Right lobe of liver (tissue), 6 donors: ENCODE measurements at regions of chr7 and their contacts with region 1.

Region 1: GRCh38 chr7:2886900-2887299 is 42.8 kb upstream of the GNA12 start:
- DNase-seq: peak in 1 of 3 donors; percentile 53
- ATAC-seq: peak; percentile 76 to 91 (median 84)
- H3K4me3 ChIP-seq: no peak overlapping the region
- H3K27ac ChIP-seq: no peak overlapping the region
- H3K4me1 ChIP-seq: no peaks in the 10 kb centered on the region
- H3K27me3 ChIP-seq: no peaks in the 10 kb centered on the region
- CTCF ChIP-seq: peak; percentile 47 to 65 (median 54)
- POLR2A ChIP-seq: no peak

Region 2: DNA sequence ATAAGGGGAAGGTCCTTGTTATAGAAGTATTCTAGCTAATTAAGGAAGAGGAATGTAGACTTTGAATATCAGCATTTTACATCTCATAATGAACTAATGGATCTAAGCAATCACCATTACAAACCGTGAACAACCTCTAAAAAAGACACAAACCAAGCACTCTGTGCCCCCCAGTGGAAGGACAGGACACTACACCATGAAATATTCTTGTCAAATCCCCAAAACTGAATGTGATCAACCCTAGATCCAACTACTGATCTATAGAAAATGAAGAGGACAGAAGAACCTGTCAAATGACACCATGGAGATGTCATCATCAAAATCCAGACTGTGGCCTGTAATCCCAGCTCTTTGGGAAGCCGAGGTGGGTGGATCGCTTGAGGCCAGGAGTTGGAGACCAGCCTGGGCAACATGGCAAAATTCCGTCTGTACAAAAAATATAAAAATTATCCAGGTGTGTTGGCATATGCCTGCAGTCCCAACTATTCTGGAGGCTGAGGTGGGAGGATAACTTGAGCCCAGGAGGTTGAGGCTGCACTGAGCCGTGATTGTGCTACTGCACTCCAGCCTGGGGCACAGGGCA is 268.1 kb after region 1 on chr7:
- intact Hi-C with region 1: loop called (anchors 10 kb)
- DNase-seq: no peak
- ATAC-seq: peak; percentile 54 to 80 (median 68)
- H3K4me3 ChIP-seq: no peak overlapping the region
- H3K27ac ChIP-seq: no peak overlapping the region
- H3K4me1 ChIP-seq: no peaks in the 10 kb centered on the region
- H3K27me3 ChIP-seq: no peaks in the 10 kb centered on the region
- CTCF ChIP-seq: peak; percentile 44 to 72 (median 65)
- POLR2A ChIP-seq: no peak